ENCODE measurements at regions of chr4 and their contacts with region 1.

Region 1: GRCh38 chr4:132266374-132266773 is 882.7 kb upstream of the PCDH10 start:
- DNase-seq: peak; percentile 97
- H3K4me3 ChIP-seq: no peak overlapping the region
- H3K27ac ChIP-seq: peak overlapping the region; percentile 100
- H3K4me1 ChIP-seq: peaks cover 59% of the 10 kb centered on the region
- CTCF ChIP-seq: no peak

Region 2: DNA sequence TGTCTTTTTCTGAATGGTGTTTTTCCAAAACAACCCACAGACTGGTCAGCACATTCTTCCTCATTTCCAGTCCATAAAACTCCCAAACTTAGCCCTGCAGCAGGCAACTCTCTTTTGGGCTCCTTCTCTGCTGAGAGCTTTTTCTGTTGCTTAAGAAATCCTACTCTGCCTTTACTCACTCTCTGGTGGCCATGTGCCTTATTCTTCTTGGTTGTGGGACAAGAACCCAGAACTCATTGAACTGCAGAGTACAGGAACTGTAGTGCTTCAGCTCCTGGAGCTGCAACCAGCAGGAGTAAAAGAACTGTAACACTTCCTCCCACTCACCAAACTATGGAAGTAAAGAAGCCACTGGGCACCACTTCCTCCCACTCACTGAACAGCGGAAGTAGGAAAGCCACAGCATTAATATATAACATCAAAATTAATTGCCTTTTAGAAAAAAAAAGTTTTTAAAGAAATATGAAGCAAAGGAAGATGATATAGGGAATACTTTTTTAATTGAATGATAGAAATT is 18.6 kb after region 1 on chr4:
- CTCF ChIA-PET with region 1: no interaction called
- POLR2A ChIA-PET with region 1: interaction called, 11 read pairs
- intact Hi-C with region 1: no loop called
- DNase-seq: peak; percentile 72
- H3K4me3 ChIP-seq: no peak overlapping the region
- H3K27ac ChIP-seq: no peak overlapping the region
- H3K4me1 ChIP-seq: no peaks in the 10 kb centered on the region
- CTCF ChIP-seq: no peak

Region 3: GRCh38 chr4:132502096-132502552 is 235.8 kb after region 1 on chr4:
- CTCF ChIA-PET with region 1: no interaction called
- POLR2A ChIA-PET with region 1: no interaction called
- intact Hi-C with region 1: loop called (anchors 10 kb)
- DNase-seq: no peak
- H3K4me3 ChIP-seq: no peak overlapping the region
- H3K27ac ChIP-seq: peak overlapping the region; percentile 38
- H3K4me1 ChIP-seq: peaks cover 10% of the 10 kb centered on the region
- CTCF ChIP-seq: no peak

Region 4: DNA sequence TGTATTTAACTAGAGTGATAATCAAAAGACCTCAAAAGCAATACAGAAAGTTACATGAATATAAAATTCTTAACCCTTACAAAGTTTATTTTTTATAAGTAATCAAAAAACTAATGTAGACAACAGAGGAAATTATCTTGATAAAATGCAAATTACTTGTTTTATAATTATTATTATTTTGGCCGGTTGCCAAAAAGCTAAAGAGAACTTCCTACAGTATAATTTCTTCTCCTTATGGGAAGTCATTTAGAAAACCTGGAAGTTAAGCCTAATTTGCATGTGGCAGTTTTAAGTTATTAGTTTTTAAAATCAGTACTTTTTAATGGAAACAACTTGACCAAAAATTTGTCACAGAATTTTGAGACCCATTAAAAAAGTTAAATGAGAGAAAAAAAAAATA is 261.4 kb after region 1 on chr4:
- CTCF ChIA-PET with region 1: no interaction called
- POLR2A ChIA-PET with region 1: no interaction called
- intact Hi-C with region 1: loop called (anchors 5 kb)
- DNase-seq: no peak
- H3K4me3 ChIP-seq: no peak overlapping the region
- H3K27ac ChIP-seq: no peak overlapping the region
- H3K4me1 ChIP-seq: peaks cover 29% of the 10 kb centered on the region
- CTCF ChIP-seq: no peak

Region 5: DNA sequence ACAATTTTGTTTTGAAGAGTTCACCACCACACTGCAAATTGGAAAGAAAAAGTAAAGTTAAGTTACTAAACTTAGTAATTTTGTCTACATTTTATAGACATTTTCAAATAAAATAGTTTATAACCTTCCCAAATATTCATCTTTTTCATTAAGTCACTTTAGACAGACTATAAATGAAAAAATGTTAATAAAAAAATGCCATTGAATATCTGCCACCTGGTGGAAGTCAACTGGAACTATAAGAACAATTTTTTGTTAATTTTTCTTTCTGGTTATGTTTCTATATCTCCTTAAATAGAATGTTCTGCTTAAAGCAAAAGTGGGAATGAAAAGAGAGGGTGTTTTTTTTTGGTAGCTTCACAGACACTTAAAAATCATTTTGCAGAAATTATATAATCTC is 348.3 kb after region 1 on chr4:
- CTCF ChIA-PET with region 1: no interaction called
- POLR2A ChIA-PET with region 1: no interaction called
- intact Hi-C with region 1: loop called (anchors 5 kb)
- DNase-seq: peak; percentile 28
- H3K4me3 ChIP-seq: no peak overlapping the region
- H3K27ac ChIP-seq: no peak overlapping the region
- H3K4me1 ChIP-seq: no peaks in the 10 kb centered on the region
- CTCF ChIP-seq: peak; percentile 81

Region 6: GRCh38 chr4:132642016-132642817 is 375.8 kb after region 1 on chr4:
- CTCF ChIA-PET with region 1: no interaction called
- POLR2A ChIA-PET with region 1: no interaction called
- intact Hi-C with region 1: loop called (anchors 5 kb)
- DNase-seq: peak; percentile 85
- H3K4me3 ChIP-seq: no peak overlapping the region
- H3K27ac ChIP-seq: no peak overlapping the region
- H3K4me1 ChIP-seq: peaks cover 8% of the 10 kb centered on the region
- CTCF ChIP-seq: peak; percentile 98